ENCODE measurements at regions of chr9 and their contacts with region 1.

Region 1: DNA sequence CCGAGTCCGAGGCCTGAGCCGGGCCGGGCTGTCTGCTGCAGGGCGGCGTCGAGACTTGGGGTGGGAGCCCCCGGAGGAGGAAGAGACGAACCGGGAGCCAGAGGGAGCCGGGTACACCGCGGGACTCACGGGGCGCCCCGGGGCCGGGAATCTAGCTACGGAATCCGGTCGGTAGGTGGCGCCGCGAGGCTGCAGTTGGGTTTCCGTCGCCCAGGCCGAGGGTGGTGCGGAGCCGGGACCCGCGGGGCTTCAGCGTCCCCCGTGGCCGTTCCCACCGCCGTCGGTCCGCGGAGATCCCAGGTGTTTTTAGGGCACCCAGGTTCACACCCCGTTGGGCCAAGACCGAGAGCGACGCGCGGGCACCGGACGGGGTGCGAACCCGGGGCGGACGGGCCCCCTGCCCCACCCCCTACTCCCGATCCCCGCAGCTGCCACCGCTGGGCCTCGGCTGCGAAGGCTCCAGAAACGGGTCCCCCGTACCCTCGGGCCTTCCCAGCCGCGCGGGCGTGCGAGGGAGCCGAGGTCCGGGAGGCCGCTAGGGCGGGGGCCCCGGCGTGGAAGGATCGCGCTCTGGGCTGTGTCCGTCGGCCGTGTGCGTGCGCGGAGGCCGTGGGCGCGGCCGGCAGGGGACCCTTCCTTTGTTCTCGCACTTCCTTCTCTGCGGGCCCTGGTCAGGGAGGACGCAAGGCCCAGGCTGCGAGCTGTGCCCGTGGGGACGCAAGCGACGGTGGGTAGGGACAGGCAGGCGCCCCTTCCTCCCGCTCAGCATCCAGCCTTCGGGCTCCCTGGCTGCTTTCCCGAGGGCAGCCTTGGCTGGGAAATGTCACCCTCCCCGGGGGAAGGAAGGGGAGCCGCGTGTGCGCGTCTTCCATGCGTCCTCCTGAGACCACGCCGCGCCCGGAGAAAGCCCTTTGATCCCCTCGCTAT is 146.6 kb downstream of the GAPVD1 start:
- DNase-seq: peak; percentile 69 to 86
- H3K4me3 ChIP-seq: peak overlapping the region; percentile 36 to 46
- H3K27ac ChIP-seq: peak overlapping the region; percentile 0 to 52
- H3K4me1 ChIP-seq: no peaks in the 10 kb centered on the region
- H3K27me3 ChIP-seq: no peaks in the 10 kb centered on the region
- CTCF ChIP-seq: peak; percentile 77 to 92 (median 88)
- POLR2A ChIP-seq: no peak

Region 2: GRCh38 chr9:125631391-125632085 is 223.3 kb after region 1 on chr9:
- intact Hi-C with region 1: loop called (anchors 5 kb)
- DNase-seq: no peak
- H3K4me3 ChIP-seq: no peak overlapping the region
- H3K27ac ChIP-seq: no peak overlapping the region
- H3K4me1 ChIP-seq: peaks cover 0 to 6% of the 10 kb centered on the region in 2 donors
- H3K27me3 ChIP-seq: no peaks in the 10 kb centered on the region
- CTCF ChIP-seq: peak; percentile 19 to 59 (median 49)
- POLR2A ChIP-seq: no peak